Sigmoid colon (tissue), 7 donors: ENCODE measurements at regions of chr4 and their contacts with region 1.

Region 1: GRCh38 chr4:186037692-186038658 is 31.0 kb upstream of the TLR3 start:
- DNase-seq: peak; percentile 82
- H3K4me3 ChIP-seq: no peak overlapping the region
- H3K27ac ChIP-seq: peak overlapping the region; percentile 68 to 87 (median 74)
- H3K4me1 ChIP-seq: peaks cover 0 to 30% (median 18%) of the 10 kb centered on the region in 4 donors
- H3K27me3 ChIP-seq: no peaks in the 10 kb centered on the region
- CTCF ChIP-seq: peak; percentile 76 to 85 (median 80)
- EP300 ChIP-seq: no peak
- POLR2A ChIP-seq: no peak

Region 2: DNA sequence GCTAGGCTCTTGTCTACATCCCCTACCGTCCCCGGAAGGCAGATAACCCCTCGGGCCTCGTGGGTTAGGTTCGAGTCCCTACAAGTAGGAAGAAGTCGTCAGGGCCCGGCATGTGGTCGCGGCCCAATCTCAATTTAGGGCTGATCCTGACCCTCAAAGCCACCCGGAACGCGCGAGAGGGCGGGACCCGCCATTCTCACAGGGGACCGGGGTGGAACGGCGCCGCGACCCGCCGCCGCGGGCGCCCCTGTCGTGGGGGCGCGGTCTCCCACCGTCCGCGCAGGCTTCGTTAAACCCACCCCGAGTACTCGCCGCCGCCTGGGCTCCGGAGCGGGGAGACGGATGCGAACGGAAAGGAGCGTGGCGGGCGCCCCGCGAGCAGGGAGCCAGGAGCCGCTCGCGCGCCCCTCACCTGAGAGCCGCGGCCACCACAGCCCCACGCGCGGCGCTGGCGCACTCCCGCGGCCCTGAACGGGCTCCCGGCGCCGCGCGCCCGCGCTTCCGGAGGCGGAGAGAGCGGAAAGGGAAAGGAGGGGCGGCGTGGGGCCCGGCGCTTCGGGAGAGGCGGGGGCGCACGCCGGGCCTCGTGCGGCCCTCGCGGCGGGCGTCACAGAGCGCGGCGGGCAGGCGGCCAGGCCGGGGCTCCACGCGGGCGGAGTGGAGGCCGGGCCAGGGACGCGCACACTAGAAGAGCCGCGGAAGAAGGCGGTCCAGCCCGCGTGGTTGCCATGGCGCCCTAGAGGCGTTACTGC is 834.3 kb before region 1 on chr4 and contains the start of gene CFAP97:
- intact Hi-C with region 1: loop called (anchors 10 kb)
- DNase-seq: peak; percentile 96
- H3K4me3 ChIP-seq: peak within 1 kb of the TSS; percentile 50 to 85 (median 72)
- H3K27ac ChIP-seq: peak within 1 kb of the TSS; percentile 94 to 98 (median 96)
- H3K4me1 ChIP-seq: peaks cover 0 to 29% (median 26%) of the 10 kb centered on the region in 4 donors
- H3K27me3 ChIP-seq: no peaks in the 10 kb centered on the region
- CTCF ChIP-seq: no peak
- EP300 ChIP-seq: no peak
- POLR2A ChIP-seq: peak in 1 of 2 donors; percentile 15
- total RNA-seq, gene CFAP97: 33.8 to 46.4 (median 37.3) TPM

Region 3: GRCh38 chr4:185471235-185472102 is 566.5 kb before region 1 on chr4 and contains the start of gene CCDC110:
- intact Hi-C with region 1: loop called (anchors 5 kb)
- DNase-seq: peak; percentile 99
- H3K4me3 ChIP-seq: peak within 1 kb of the TSS; percentile 52 to 95 (median 78)
- H3K27ac ChIP-seq: peak within 1 kb of the TSS; percentile 73 to 81 (median 77)
- H3K4me1 ChIP-seq: peaks cover 0 to 14% (median 7%) of the 10 kb centered on the region in 4 donors
- H3K27me3 ChIP-seq: no peaks in the 10 kb centered on the region
- CTCF ChIP-seq: peak; percentile 25 to 77 (median 46)
- EP300 ChIP-seq: no peak
- POLR2A ChIP-seq: no peak
- total RNA-seq, gene CCDC110: 1.6 to 9.3 (median 7.2) TPM

Region 4: DNA sequence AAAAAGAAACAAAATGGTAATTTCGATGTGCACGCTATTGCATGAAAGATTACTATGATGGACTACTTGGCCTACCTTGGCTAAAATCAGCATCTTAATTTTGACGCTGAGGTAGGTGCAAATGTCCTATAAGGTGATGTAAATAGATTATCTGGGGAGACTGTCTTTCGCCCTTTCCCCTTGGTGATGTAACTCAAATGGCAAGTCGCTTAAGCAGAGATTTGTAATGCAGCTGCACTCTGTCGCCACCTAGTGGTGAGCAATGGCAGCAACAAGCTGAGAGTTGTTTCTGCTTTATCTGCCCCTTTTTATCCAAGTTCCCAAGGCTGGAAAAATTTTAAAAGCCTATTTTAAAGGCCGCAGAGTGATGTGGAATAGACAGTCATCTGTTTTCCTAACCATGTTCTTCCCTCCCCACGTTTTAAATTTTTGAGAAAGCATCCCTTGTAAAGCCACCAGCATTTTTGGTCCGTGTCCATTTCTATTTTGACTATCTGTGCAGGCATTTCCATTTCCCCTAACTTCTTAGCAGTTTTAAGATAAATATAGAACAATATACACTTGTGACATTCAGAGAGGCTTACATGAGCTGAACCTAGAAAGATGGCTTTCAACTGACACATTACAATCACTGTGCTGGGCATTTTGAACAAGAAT is 440.3 kb before region 1 on chr4:
- intact Hi-C with region 1: loop called (anchors 5 kb)
- DNase-seq: peak; percentile 89
- H3K4me3 ChIP-seq: no peak overlapping the region
- H3K27ac ChIP-seq: peak overlapping the region; percentile 44 to 82 (median 76)
- H3K4me1 ChIP-seq: peaks cover 0 to 36% (median 25%) of the 10 kb centered on the region in 4 donors
- H3K27me3 ChIP-seq: no peaks in the 10 kb centered on the region
- CTCF ChIP-seq: peak; percentile 97 to 99 (median 98)
- EP300 ChIP-seq: no peak
- POLR2A ChIP-seq: no peak